Prostate gland (tissue), 2 donors: ENCODE measurements at regions of chr1 and their contacts with region 1.

Region 1: GRCh38 chr1:66968574-66968973 is 43.8 kb downstream of the MIER1 start:
- DNase-seq: no peak
- H3K4me3 ChIP-seq: no peak overlapping the region
- H3K27ac ChIP-seq: no peak overlapping the region
- H3K4me1 ChIP-seq: no peaks in the 10 kb centered on the region
- H3K27me3 ChIP-seq: no peaks in the 10 kb centered on the region
- CTCF ChIP-seq: no peak
- POLR2A ChIP-seq: no peak

Region 2: GRCh38 chr1:66452162-66452561 is 516.4 kb before region 1 on chr1:
- intact Hi-C with region 1: loop called (anchors 5 kb)
- DNase-seq: peak; percentile 12
- H3K4me3 ChIP-seq: no peak overlapping the region
- H3K27ac ChIP-seq: no peak overlapping the region
- H3K4me1 ChIP-seq: no peaks in the 10 kb centered on the region
- H3K27me3 ChIP-seq: no peaks in the 10 kb centered on the region
- CTCF ChIP-seq: peak in 2 of 4 experiments; percentile 12 to 35
- POLR2A ChIP-seq: no peak

Region 3: DNA sequence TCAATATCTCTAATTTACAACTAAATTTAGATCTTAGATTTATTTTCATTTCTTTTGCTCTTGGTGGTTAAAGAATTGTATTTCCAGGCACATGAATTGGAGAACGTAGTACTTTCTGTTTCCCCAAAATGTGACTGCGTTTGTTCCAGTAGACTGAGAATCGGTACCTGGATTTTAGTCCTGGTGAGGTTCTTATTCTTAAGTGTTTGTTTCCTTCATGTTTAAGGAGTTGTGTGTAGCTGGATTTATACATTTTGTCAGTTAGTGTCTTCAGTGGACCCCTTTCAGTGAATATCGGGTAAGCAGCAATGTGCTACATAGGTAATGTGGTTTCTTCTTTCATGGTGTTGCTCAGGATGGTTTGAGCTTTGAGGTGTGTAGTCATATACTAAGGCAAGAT is 37.0 kb before region 1 on chr1:
- intact Hi-C with region 1: no loop called
- DNase-seq: no peak
- H3K4me3 ChIP-seq: peak overlapping the region; percentile 74 to 89
- H3K27ac ChIP-seq: peak overlapping the region; percentile 97
- H3K4me1 ChIP-seq: no peaks in the 10 kb centered on the region
- H3K27me3 ChIP-seq: no peaks in the 10 kb centered on the region
- CTCF ChIP-seq: no peak
- POLR2A ChIP-seq: no peak

Region 4: GRCh38 chr1:67110352-67110751 is 141.8 kb after region 1 on chr1:
- intact Hi-C with region 1: no loop called
- DNase-seq: no peak
- H3K4me3 ChIP-seq: no peak overlapping the region
- H3K27ac ChIP-seq: no peak overlapping the region
- H3K4me1 ChIP-seq: no peaks in the 10 kb centered on the region
- H3K27me3 ChIP-seq: no peaks in the 10 kb centered on the region
- CTCF ChIP-seq: no peak
- POLR2A ChIP-seq: no peak